ENCODE measurements at regions of chr3 and their contacts with region 1.

Region 1: GRCh38 chr3:32992322-32992692 is 40.9 kb downstream of the CCR4 start:
- DNase-seq: no peak
- ATAC-seq: peak; percentile 6
- H3K4me3 Mint-ChIP-seq: peak overlapping the region; percentile 62
- H3K27ac Mint-ChIP-seq: peak overlapping the region; percentile 95
- H3K4me1 Mint-ChIP-seq: peaks cover 80% of the 10 kb centered on the region
- H3K27me3 Mint-ChIP-seq: peaks cover 2% of the 10 kb centered on the region

Region 2: DNA sequence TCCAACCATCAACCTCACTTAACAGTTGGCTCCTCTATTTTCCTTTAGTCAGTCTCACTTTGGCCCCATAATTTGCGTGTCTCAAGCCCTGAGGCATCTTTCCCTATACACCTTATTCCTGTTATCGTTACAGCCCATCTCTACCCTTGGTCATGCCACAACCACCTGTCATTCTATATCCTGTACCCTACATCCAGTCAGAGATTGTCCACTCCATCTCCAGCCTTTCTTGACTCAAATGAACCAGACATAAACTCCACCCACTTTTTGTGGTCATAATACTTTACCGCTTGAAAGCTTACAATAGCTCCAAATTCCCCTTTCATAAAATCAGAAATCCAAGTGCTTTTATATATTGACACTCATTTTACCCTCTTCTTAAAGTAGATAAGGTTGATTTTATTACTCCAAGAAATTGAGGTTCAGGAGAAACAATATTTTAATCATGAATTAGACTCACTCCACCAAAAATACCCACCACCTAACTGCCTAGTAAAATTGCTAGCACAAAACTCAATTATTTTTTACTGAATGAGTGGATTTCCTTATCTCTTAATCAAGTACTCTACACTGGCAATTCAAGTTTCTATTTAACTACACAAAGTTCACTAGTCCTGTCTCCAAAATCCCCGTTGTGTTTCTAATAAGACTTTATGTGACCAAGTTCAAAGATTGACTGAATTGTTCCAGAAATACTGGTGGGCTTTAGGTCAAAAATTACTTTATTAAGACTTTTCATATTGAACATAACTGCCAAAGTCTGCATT is 31.7 kb before region 1 on chr3:
- CTCF ChIA-PET with region 1: interaction called, 3 read pairs
- POLR2A ChIA-PET with region 1: interaction called, 10 read pairs
- intact Hi-C with region 1: loop called (anchors 1 kb)
- DNase-seq: no peak
- ATAC-seq: peak; percentile 61
- H3K4me3 Mint-ChIP-seq: peak overlapping the region; percentile 8
- H3K27ac Mint-ChIP-seq: peak overlapping the region; percentile 97
- H3K4me1 Mint-ChIP-seq: peaks cover 77% of the 10 kb centered on the region
- H3K27me3 Mint-ChIP-seq: no peaks in the 10 kb centered on the region

Region 3: DNA sequence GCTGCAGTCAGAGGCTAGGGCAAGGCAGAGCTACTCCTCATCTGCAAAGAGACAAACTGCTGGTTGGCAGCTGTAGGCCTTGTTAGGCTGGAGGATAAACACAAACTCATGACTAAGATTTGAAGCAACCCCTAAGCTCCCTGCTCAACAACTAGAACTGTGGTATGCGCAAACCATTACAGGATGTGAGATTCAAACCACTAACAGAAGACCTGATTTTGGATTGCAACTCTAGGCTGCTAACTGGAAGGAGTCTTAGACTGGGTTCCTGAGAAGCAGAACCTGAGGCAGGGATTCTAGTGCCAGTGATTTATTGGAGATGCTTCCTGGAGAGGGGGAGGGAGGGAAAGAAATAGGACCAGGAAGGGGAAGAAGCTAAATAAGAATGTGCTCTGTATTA is 18.3 kb before region 1 on chr3:
- CTCF ChIA-PET with region 1: interaction called, 8 read pairs
- POLR2A ChIA-PET with region 1: interaction called, 6 read pairs
- intact Hi-C with region 1: loop called in 1 of 2 experiments (anchors 2 kb)
- DNase-seq: peak; percentile 40
- ATAC-seq: peak; percentile 98
- H3K4me3 Mint-ChIP-seq: no peak overlapping the region
- H3K27ac Mint-ChIP-seq: no peak overlapping the region
- H3K4me1 Mint-ChIP-seq: peaks cover 36% of the 10 kb centered on the region
- H3K27me3 Mint-ChIP-seq: no peaks in the 10 kb centered on the region

Region 4: GRCh38 chr3:33131331-33132018 is 139.2 kb after region 1 on chr3:
- CTCF ChIA-PET with region 1: no interaction called
- POLR2A ChIA-PET with region 1: no interaction called
- intact Hi-C with region 1: no loop called
- DNase-seq: peak; percentile 54
- ATAC-seq: peak; percentile 63
- H3K4me3 Mint-ChIP-seq: no peak overlapping the region
- H3K27ac Mint-ChIP-seq: no peak overlapping the region
- H3K4me1 Mint-ChIP-seq: peaks cover 10% of the 10 kb centered on the region
- H3K27me3 Mint-ChIP-seq: no peaks in the 10 kb centered on the region

Region 5: DNA sequence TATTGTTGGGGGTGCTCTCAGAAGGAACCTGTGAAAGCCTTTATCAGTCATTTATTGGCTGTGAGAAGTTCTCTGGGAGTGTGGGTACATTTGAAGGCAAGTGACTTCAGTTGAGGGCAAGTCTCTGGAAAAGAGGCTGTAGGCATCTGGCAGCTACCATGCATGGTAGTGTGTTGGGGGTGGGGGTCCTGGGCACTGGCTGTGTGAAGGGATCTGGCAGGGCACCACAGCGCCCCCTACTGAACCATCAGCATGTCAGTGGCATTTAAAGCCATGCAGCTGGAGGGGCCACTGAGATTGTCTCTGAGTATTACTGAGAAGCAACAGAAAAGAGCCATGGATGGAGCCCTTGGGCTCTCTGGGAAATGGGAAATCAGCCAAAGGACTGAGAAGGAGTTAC is 152.1 kb after region 1 on chr3:
- CTCF ChIA-PET with region 1: no interaction called
- POLR2A ChIA-PET with region 1: no interaction called
- intact Hi-C with region 1: no loop called
- DNase-seq: peak; percentile 63
- ATAC-seq: peak; percentile 66
- H3K4me3 Mint-ChIP-seq: no peak overlapping the region
- H3K27ac Mint-ChIP-seq: no peak overlapping the region
- H3K4me1 Mint-ChIP-seq: no peaks in the 10 kb centered on the region
- H3K27me3 Mint-ChIP-seq: no peaks in the 10 kb centered on the region

Region 6: GRCh38 chr3:33218446-33219174 is 226.3 kb after region 1 on chr3 and contains the start of gene SUSD5:
- CTCF ChIA-PET with region 1: no interaction called
- POLR2A ChIA-PET with region 1: no interaction called
- intact Hi-C with region 1: no loop called
- DNase-seq: peak; percentile 18
- ATAC-seq: no peak
- H3K4me3 Mint-ChIP-seq: no peak within 1 kb of the TSS
- H3K27ac Mint-ChIP-seq: no peak within 1 kb of the TSS
- H3K4me1 Mint-ChIP-seq: peaks cover 5% of the 10 kb centered on the region
- H3K27me3 Mint-ChIP-seq: peaks cover 48% of the 10 kb centered on the region
- total RNA-seq, gene SUSD5: not detected

Measured in activated CD4-positive, alpha-beta T cell treated with anti-CD3 and anti-CD28 coated beads for 36 hours (primary cell).